Dorsolateral prefrontal cortex (tissue), 120 donors: ENCODE measurements at regions of chr1 and their contacts with region 1.

Region 1: DNA sequence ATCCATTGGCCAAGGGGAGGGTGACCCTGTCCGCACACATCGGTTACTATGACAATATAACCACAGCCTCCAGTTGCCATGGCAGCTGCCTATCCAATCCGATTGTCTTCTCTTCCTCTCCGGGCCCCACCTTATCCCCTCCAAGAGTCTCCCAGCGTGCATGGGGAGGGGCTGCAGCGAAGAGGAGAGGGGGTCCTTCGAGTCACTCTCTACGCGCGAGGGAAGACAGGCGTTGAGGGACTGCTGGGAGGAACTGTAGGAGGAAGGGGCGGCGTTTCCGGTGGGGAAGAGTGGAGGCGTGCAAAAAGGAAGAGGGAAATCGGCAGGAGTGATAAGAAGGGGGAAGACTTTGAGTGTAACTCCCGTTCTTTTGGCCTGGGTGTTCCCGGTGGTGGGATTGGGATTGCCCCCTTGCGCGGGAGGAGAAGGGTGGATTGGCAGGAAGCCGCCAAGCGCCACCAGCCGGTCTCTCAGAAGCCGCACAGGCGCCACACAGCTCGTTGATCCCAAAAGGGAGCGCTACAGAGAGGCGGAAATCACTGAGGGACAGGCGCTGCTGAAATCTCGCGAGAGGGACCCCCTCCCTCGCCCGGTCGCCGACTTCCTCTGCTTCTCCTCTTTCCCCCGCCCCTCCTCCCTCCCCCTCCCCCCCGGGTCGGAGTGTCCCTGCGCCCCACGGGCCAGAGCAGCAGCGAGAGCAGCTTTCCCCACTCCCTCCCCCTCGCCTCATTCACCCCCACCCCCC is 384 bp upstream of the SMG7 start:
- DNase-seq: peak; percentile 94 to 99 (median 97)
- H3K4me3 ChIP-seq: peak overlapping the region; percentile 67 to 100 (median 95)
- H3K27ac ChIP-seq: peak overlapping the region; percentile 88 to 100 (median 97)
- H3K27me3 ChIP-seq: no peaks in the 10 kb centered on the region
- CTCF ChIP-seq: peak in 50 of 56 donors; percentile 15 to 64 (median 40)

Region 2: GRCh38 chr1:183287191-183287675 is 184.7 kb before region 1 on chr1:
- intact Hi-C with region 1: loop called (anchors 5 kb)
- DNase-seq: peak in 8 of 10 donors; percentile 44 to 87 (median 63)
- H3K4me3 ChIP-seq: no peak overlapping the region
- H3K27ac ChIP-seq: peak overlapping the region in 53 of 59 donors; percentile 3 to 84 (median 59)
- H3K27me3 ChIP-seq: no peaks in the 10 kb centered on the region
- CTCF ChIP-seq: no peak

Region 3: GRCh38 chr1:183543619-183544204 is 71.8 kb after region 1 on chr1:
- intact Hi-C with region 1: loop called (anchors 5 kb)
- DNase-seq: peak in 1 of 10 donors; percentile 10
- H3K4me3 ChIP-seq: peak overlapping the region in 1 of 59 donors; percentile 6
- H3K27ac ChIP-seq: peak overlapping the region in 13 of 59 donors; percentile 1 to 59 (median 25)
- H3K27me3 ChIP-seq: no peaks in the 10 kb centered on the region
- CTCF ChIP-seq: peak; percentile 47 to 79 (median 66)

Region 4: DNA sequence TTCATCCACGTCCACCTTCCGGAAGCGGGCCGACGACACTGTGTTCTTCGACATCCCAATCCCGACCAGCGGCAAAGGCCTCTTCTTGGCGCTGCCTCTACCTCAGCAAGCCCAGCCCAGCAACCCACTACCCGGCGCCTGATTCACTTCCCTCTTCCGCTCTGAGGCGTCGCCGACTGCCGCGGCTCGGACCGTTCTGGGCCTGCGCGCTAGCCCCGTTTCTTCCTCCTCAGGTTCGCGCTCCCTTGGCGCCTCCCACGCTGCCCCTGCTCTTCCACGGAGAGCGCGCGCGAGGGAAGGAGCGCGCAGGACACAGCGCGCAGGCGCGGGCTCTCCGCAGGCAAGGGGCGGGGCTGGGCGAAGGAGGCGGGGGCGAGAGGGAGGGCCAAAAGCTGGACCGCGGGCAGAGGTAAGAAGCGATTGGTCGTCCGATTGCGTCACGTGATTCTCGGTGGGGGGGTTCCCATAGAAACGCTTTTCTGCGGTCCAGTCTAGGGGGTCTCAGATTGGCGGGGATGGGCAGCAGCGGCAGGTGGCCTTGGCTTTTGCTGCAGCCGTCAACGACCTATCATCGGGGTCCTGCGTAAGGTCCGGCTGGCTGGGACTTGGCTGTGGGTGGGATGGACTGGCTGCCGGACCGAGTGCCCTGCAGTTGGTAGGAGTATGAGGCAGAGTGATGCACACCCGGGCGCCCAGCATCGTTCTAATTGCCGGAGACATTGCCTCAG is 163.9 kb after region 1 on chr1 and contains the start of gene ARPC5:
- intact Hi-C with region 1: loop called in 1 of 2 experiments (anchors 5 kb)
- DNase-seq: peak; percentile 94 to 99 (median 97)
- H3K4me3 ChIP-seq: peak within 1 kb of the TSS; percentile 70 to 99 (median 88)
- H3K27ac ChIP-seq: peak within 1 kb of the TSS; percentile 69 to 99 (median 94)
- H3K27me3 ChIP-seq: no peaks in the 10 kb centered on the region
- CTCF ChIP-seq: peak in 35 of 56 donors; percentile 4 to 60 (median 24)
- total RNA-seq, gene ARPC5: 31.6 to 78.5 (median 50.0) TPM

Region 5: GRCh38 chr1:183922197-183922596 is 450.3 kb after region 1 on chr1:
- intact Hi-C with region 1: loop called (anchors 2 to 5 kb)
- DNase-seq: no peak
- H3K4me3 ChIP-seq: no peak overlapping the region
- H3K27ac ChIP-seq: peak overlapping the region in 58 of 59 donors; percentile 84 to 100 (median 97)
- H3K27me3 ChIP-seq: no peaks in the 10 kb centered on the region
- CTCF ChIP-seq: peak in 9 of 56 donors; percentile 11 to 43 (median 31)